Cardiac septum (tissue), 1 donor: ENCODE measurements at regions of chr1 and their contacts with region 1.

Region 1: GRCh38 chr1:63773815-63774616 is at the start of gene ROR1:
- DNase-seq: peak; percentile 93
- total RNA-seq, gene ROR1: 34.8 TPM

Region 2: GRCh38 chr1:63704443-63704842 is 69.6 kb before region 1 on chr1:
- intact Hi-C with region 1: loop called (anchors 5 kb)
- DNase-seq: no peak

Region 3: GRCh38 chr1:63914241-63914640 is 140.2 kb after region 1 on chr1:
- intact Hi-C with region 1: loop called (anchors 5 kb)
- DNase-seq: no peak

Region 4: DNA sequence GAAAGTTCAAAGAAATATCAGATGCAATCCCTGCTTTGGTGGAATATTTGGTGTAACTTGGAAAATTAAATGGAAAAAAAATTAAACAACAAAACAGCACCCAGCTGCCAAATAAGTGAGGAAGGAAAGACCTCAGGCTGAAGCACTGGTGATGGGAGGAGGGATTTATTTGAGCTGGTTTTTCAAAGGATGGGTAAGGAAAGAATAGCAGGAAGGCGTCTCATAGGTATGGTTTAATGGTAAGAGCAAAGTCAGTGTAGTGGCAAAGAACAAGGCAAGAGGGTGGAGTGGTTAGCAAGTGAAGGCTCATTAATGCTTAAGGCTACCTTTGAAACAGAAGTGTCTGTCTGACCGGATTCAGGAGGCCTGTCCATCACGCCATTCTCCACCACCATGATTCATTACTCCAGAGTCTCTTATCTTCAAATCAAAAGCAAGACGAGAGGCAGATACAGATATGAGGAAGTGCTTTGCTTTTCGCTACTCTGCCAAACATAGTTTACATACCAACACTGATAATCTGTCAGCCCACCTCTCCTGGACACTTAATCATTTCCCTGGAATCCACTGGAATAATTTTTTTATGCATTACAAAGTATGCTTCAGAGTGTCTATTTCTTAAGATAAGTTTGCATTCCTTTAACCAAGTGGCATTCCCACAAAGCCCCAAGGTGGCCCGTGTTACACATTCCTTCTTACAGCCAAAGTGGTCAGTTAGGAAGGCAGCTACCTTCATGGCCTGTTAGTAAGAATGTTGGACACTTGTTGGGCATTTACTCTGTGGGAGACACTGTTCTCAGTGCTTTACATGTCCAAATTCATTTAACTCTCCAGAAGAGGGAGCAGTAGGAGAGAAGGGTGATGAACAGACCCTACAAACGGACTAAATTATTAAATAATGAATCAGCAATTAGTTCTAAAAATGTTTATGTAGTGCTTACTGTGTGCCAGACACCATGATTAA is 146.4 kb after region 1 on chr1:
- intact Hi-C with region 1: loop called (anchors 5 kb)
- DNase-seq: no peak

Region 5: DNA sequence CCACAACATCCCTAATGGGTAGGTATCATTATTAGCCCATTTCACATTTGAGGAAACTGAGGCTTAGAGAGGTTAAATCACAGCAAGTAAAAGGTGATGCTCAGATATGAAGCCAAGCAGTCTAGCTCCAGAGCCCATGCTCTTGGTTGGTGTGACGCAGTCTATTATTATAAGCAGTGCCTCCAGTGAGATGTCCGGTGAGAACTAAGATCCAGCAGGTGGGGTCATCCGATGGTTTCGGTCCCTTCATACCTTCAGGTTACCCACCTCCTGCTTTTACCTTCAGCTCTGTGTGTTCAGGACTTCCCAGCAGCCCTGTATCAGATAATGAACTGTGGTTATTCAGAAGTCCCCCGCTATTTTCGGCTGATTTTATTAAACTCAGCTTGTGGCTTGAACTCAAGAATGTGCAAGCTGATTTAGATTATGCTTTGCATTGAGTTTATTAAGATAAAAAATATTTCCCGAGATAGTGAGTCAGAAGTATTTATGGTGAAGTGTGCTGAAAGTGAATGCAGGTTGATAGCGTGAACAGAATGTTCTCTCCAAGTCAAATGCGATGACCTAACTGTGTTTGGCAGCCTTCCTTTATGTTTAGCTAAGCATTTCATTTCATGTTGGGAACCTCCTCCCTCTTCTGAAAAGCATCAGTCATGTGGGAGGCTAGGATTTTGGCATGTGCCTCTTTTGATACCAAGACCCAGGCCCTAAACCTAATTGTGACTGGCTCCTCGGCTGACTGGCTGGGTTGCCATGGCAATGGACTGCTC is 268.5 kb after region 1 on chr1:
- intact Hi-C with region 1: loop called (anchors 5 kb)
- DNase-seq: no peak

Region 6: GRCh38 chr1:64136752-64137411 is 362.9 kb after region 1 on chr1:
- intact Hi-C with region 1: loop called (anchors 2 kb)
- DNase-seq: no peak

Region 7: GRCh38 chr1:64242895-64243756 is 469.1 kb after region 1 on chr1:
- intact Hi-C with region 1: loop called (anchors 5 kb)
- DNase-seq: no peak